ENCODE measurements at regions of chr12 and their contacts with region 1.

Region 1: DNA sequence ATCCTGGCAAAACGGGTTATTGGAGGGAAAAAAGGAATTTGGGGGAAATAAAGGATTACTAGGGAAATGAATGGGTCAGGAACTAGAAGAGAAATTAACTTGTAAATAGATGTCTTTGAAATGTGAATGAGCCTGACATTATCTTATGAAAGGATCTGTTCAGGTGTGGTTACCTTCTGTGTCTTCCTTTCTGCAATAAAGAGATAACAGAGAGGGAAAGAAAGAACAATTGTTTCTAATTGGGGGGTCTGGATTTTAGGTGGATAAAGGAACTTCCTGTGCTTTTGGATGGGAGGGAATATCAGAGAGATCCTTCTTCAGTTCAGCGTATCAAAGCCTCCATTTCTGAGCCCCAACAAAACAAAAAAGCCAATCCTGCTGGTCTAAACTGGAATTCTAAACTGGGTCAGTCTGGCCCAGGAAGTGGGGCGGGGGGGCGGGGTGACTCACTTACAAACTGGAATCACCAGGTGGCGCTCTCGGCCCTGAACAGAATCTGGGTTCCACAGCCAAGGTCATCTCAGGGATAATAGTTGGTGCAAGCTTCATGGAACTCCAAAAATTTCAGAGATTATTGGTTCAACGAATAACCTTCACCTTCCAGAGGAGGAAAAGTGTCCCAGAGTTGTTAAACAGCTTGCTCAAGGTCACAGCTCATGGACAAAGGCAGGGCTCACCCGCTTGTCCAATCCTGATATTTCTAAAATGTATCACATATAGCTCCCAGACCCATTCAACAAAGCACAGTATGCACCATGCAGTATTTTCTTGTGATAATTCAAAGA is 15.2 kb upstream of the PEBP1 start:
- DNase-seq: peak; percentile 25 to 74 (median 60)
- ATAC-seq: peak; percentile 65
- H3K4me3 ChIP-seq: no peak overlapping the region
- H3K4me3 Mint-ChIP-seq: peak overlapping the region; percentile 0
- H3K27ac ChIP-seq: peak overlapping the region in 1 of 2 experiments; percentile 34
- H3K27ac Mint-ChIP-seq: peak overlapping the region; percentile 47
- H3K4me1 ChIP-seq: peaks cover 4% of the 10 kb centered on the region
- H3K4me1 Mint-ChIP-seq: peaks cover 11% of the 10 kb centered on the region
- H3K27me3 ChIP-seq: no peaks in the 10 kb centered on the region
- H3K27me3 Mint-ChIP-seq: no peaks in the 10 kb centered on the region
- CTCF ChIP-seq: peak; percentile 75

Region 2: DNA sequence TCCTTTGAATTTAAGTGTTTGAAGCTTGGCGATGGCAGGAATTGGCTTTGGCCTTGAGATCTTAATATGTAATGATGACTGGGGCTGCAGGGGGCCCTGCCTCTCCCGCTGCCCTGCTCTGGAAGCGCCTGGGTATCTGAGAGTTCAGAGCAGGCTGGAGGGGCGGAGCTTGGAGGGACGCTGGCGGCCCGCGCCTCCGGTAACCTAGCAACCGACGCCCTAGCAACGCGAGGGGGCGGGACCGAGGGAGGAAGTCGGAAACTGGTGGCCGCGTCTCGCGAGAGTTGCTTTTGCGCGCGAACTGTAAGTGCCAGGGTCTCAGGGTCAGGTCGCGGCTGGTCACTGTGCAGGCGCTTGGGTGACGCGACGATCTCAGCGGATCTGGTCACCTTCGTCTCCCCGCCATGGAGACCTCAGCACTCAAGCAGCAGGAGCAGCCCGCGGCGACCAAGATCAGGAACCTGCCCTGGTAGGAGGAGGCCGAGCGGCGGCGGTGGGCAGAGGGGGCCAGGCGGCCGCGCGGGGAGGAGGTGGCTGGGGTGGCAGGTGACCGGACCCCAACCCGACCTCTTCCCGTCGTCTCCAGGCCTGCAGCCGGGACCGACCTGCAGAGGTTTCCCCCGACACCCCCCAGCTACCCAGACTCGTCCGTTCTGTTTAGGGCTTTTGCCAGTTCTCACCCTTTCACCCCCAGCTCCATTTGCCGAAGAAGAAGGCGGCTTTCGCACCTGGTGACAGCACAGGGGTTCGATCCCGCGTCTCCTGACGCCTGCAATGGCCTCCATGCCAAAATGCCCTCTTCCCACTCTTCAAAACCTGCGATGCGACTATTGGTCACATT is 104.1 kb before region 1 on chr12 and contains the start of gene RFC5:
- CTCF ChIA-PET with region 1: no interaction called
- POLR2A ChIA-PET with region 1: no interaction called
- intact Hi-C with region 1: loop called in 1 of 2 experiments (anchors 5 kb)
- DNase-seq: peak; percentile 94 to 99 (median 98)
- ATAC-seq: peak; percentile 97
- H3K4me3 ChIP-seq: peak within 1 kb of the TSS; percentile 88 to 98
- H3K4me3 Mint-ChIP-seq: peak within 1 kb of the TSS; percentile 90
- H3K27ac ChIP-seq: peak within 1 kb of the TSS in 1 of 2 experiments; percentile 58
- H3K27ac Mint-ChIP-seq: peak within 1 kb of the TSS; percentile 90
- H3K4me1 ChIP-seq: peaks cover 19% of the 10 kb centered on the region
- H3K4me1 Mint-ChIP-seq: peaks cover 18% of the 10 kb centered on the region
- H3K27me3 ChIP-seq: no peaks in the 10 kb centered on the region
- H3K27me3 Mint-ChIP-seq: no peaks in the 10 kb centered on the region
- CTCF ChIP-seq: no peak
- total RNA-seq, gene RFC5: 9.9 to 13.8 TPM

Region 3: GRCh38 chr12:118061011-118061875 is 59.5 kb before region 1 on chr12 and contains the start of gene WSB2:
- CTCF ChIA-PET with region 1: interaction called, 3 read pairs
- POLR2A ChIA-PET with region 1: no interaction called
- intact Hi-C with region 1: loop called in 1 of 2 experiments (anchors 5 kb)
- DNase-seq: peak; percentile 5 to 69 (median 50)
- ATAC-seq: peak; percentile 43
- H3K4me3 ChIP-seq: peak within 1 kb of the TSS; percentile 72 to 86
- H3K4me3 Mint-ChIP-seq: peak within 1 kb of the TSS; percentile 93
- H3K27ac ChIP-seq: peak within 1 kb of the TSS; percentile 67 to 92
- H3K27ac Mint-ChIP-seq: peak within 1 kb of the TSS; percentile 98
- H3K4me1 ChIP-seq: peaks cover 40% of the 10 kb centered on the region
- H3K4me1 Mint-ChIP-seq: peaks cover 57% of the 10 kb centered on the region
- H3K27me3 ChIP-seq: peaks cover 0 to 2% of the 10 kb centered on the region in 2 experiments
- H3K27me3 Mint-ChIP-seq: no peaks in the 10 kb centered on the region
- CTCF ChIP-seq: no peak
- total RNA-seq, gene WSB2: 16.4 to 19.5 TPM

Region 4: DNA sequence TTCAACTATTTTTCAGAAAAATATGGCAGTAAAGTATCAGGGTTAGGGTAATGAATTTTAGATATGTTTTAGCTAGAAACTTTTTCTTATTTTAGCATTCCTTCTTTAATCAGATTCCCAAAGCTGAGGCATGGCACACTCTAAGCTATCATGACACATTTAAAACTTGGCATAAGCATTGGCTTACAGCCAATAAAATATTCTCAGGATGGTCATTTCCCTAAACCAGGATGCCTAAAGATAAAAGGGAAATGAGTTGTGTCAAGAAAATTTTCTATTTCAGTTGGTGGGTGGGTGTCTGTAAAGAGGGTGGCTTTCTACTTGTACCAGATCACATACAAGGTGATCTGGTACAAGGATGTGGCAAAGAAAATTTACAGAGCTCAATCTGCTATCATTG is 62.9 kb after region 1 on chr12:
- CTCF ChIA-PET with region 1: interaction called, 5 read pairs
- POLR2A ChIA-PET with region 1: no interaction called
- intact Hi-C with region 1: loop called in 1 of 2 experiments (anchors 2 kb)
- DNase-seq: no peak
- ATAC-seq: no peak
- H3K4me3 ChIP-seq: no peak overlapping the region
- H3K4me3 Mint-ChIP-seq: no peak overlapping the region
- H3K27ac ChIP-seq: no peak overlapping the region
- H3K27ac Mint-ChIP-seq: no peak overlapping the region
- H3K4me1 ChIP-seq: no peaks in the 10 kb centered on the region
- H3K4me1 Mint-ChIP-seq: peaks cover 15% of the 10 kb centered on the region
- H3K27me3 ChIP-seq: no peaks in the 10 kb centered on the region
- H3K27me3 Mint-ChIP-seq: no peaks in the 10 kb centered on the region
- CTCF ChIP-seq: no peak

Region 5: GRCh38 chr12:119544765-119545625 is 1424.2 kb after region 1 on chr12:
- CTCF ChIA-PET with region 1: no interaction called
- POLR2A ChIA-PET with region 1: no interaction called
- intact Hi-C with region 1: loop called in 1 of 2 experiments (anchors 5 kb)
- DNase-seq: peak; percentile 18 to 68 (median 52)
- ATAC-seq: peak; percentile 52
- H3K4me3 ChIP-seq: no peak overlapping the region
- H3K4me3 Mint-ChIP-seq: no peak overlapping the region
- H3K27ac ChIP-seq: no peak overlapping the region
- H3K27ac Mint-ChIP-seq: no peak overlapping the region
- H3K4me1 ChIP-seq: no peaks in the 10 kb centered on the region
- H3K4me1 Mint-ChIP-seq: no peaks in the 10 kb centered on the region
- H3K27me3 ChIP-seq: peaks cover 0 to 2% of the 10 kb centered on the region in 2 experiments
- H3K27me3 Mint-ChIP-seq: peaks cover 41% of the 10 kb centered on the region
- CTCF ChIP-seq: peak; percentile 84

Measured in CD8-positive, alpha-beta T cell (primary cell).